ENCODE measurements at regions of chr11 and their contacts with region 1.

Region 1: DNA sequence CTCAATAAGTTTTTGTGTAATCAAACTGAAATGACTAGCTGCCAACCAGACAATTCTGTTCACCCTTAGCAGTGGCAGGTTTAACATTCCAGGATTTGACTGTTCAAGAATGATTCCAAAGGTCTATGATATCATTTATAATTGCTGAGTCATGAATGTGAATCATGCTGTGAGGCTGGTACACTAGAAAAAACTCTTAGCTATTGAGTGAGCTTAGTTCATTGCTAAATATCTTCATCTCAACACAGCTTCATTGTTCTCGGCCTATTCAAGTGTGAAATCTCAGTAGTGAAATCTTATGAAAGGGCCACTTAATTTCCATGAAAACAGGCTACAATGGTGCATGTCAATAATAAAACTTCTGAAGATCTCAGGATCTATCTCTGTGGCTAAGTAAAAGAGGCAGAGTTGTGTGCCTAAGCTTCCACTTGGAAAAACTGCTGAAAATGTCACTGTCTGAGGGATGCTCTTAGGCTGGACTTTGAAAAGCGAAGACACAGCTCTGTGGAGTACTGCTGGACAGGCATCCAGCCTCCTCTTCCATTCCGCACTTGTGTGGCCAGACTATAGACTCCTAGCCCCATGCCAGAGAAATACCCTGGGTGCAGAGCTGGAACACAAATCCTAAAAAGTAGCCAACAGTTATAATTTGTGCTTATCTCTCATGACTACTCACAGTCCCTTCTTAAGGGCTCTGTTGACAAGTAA is 12.8 kb downstream of the AQP11 start:
- DNase-seq: peak; percentile 66
- H3K4me3 ChIP-seq: no peak overlapping the region
- H3K27ac ChIP-seq: peak overlapping the region; percentile 95
- H3K27me3 ChIP-seq: no peaks in the 10 kb centered on the region
- CTCF ChIP-seq: no peak

Region 2: GRCh38 chr11:76654298-76654851 is 948.2 kb before region 1 on chr11:
- CTCF ChIA-PET with region 1: no interaction called
- POLR2A ChIA-PET with region 1: interaction called, 11 read pairs
- DNase-seq: peak; percentile 95
- H3K4me3 ChIP-seq: no peak overlapping the region
- H3K27ac ChIP-seq: peak overlapping the region; percentile 97
- H3K27me3 ChIP-seq: peaks cover 3% of the 10 kb centered on the region
- CTCF ChIP-seq: no peak

Region 3: GRCh38 chr11:77580712-77581337 is 21.7 kb before region 1 on chr11:
- CTCF ChIA-PET with region 1: interaction called, 15 read pairs
- POLR2A ChIA-PET with region 1: no interaction called
- DNase-seq: no peak
- H3K4me3 ChIP-seq: no peak overlapping the region
- H3K27ac ChIP-seq: no peak overlapping the region
- H3K27me3 ChIP-seq: no peaks in the 10 kb centered on the region
- CTCF ChIP-seq: no peak